ENCODE measurements at regions of chr5 and their contacts with region 1.

Region 1: DNA sequence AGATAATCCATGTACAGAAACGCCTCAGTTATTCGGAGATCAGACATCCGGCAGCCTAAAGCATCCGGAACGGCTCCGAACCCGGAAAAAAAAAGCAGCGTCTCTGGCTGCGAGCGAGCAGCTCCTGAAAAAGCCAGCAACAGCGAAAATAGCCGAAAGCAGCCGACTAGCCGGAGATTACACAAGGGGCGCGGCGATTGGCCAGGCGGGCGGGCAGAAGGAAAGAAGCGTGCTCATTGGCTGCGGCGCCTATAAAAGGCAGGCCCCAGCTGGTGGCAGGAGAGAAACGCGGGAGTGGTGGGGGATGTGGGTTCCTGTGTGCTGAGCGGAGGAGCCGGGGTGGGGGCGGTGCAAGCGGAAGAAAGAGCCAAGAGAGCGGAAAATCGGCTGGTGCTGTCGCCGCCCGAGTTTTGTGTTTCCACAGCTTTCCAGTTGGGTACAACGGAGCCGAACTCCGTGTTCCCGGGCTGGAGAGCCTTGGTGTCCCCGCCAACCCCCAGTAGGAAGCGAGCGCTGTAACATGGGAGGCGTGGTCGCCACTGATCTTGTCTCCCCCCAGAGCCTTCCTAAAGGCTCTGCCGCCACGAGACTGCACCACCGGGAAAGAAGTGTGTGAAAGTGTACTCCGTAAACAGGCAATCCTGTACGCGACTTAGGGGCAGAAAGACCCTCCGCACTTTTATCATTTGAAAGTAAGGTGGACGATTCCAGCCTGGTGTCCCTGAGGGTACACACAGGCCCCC is at the start of gene ARL15:
- DNase-seq: peak; percentile 98
- H3K4me3 Mint-ChIP-seq: peak within 1 kb of the TSS; percentile 86
- H3K27ac Mint-ChIP-seq: peak within 1 kb of the TSS; percentile 89
- H3K4me1 Mint-ChIP-seq: peaks cover 25% of the 10 kb centered on the region
- H3K27me3 Mint-ChIP-seq: peaks cover 3% of the 10 kb centered on the region
- total RNA-seq, gene ARL15: 4.5 to 5.5 TPM

Region 2: DNA sequence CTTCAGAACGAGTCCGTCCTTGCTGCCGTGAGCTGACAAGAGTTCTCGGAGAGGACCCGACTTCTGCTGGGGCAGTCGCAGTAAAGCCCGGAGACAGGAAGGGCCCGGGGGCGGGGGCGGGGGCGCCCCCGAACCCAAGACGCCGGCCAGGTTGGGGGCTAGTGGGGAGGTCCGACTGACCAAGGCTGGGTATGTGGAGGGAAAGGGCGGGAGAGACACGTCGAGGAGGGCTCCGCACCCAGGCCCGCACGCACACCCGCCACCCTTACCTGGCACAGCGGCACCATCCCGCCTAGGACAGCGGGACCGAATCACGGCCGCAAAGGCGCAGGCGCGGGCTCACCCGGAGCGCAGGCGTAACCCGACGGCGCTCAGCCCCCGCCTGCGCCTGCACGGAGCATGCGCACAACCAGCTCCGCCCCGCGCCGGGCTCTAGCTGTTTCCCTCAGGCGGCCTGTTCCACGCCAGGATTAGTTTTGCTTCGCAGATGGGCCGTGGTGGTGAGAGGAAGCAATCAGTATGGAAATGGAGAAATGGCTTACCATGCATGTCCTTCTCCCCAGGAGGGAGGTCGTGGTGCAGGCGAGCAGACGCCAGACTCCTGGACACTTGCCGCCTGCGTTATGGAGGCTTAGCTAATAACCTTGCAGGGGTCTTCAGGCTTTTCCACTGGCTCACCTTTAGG is 1201.0 kb before region 1 on chr5 and contains the start of gene MOCS2:
- CTCF ChIA-PET with region 1: no interaction called
- POLR2A ChIA-PET with region 1: no interaction called
- intact Hi-C with region 1: loop called (anchors 10 kb)
- DNase-seq: peak; percentile 93
- H3K4me3 Mint-ChIP-seq: peak within 1 kb of the TSS; percentile 94
- H3K27ac Mint-ChIP-seq: peak within 1 kb of the TSS; percentile 78
- H3K4me1 Mint-ChIP-seq: peaks cover 42% of the 10 kb centered on the region
- H3K27me3 Mint-ChIP-seq: no peaks in the 10 kb centered on the region
- total RNA-seq, gene MOCS2: 20.7 to 21.6 TPM

Region 3: GRCh38 chr5:53560506-53561191 is 750.0 kb before region 1 on chr5 and contains the start of gene NDUFS4:
- CTCF ChIA-PET with region 1: no interaction called
- POLR2A ChIA-PET with region 1: no interaction called
- intact Hi-C with region 1: loop called (anchors 5 kb)
- DNase-seq: peak; percentile 89
- H3K4me3 Mint-ChIP-seq: peak within 1 kb of the TSS; percentile 99
- H3K27ac Mint-ChIP-seq: peak within 1 kb of the TSS; percentile 90
- H3K4me1 Mint-ChIP-seq: peaks cover 29% of the 10 kb centered on the region
- H3K27me3 Mint-ChIP-seq: peaks cover 15% of the 10 kb centered on the region
- total RNA-seq, gene NDUFS4: 68.5 to 70.5 TPM

Region 4: DNA sequence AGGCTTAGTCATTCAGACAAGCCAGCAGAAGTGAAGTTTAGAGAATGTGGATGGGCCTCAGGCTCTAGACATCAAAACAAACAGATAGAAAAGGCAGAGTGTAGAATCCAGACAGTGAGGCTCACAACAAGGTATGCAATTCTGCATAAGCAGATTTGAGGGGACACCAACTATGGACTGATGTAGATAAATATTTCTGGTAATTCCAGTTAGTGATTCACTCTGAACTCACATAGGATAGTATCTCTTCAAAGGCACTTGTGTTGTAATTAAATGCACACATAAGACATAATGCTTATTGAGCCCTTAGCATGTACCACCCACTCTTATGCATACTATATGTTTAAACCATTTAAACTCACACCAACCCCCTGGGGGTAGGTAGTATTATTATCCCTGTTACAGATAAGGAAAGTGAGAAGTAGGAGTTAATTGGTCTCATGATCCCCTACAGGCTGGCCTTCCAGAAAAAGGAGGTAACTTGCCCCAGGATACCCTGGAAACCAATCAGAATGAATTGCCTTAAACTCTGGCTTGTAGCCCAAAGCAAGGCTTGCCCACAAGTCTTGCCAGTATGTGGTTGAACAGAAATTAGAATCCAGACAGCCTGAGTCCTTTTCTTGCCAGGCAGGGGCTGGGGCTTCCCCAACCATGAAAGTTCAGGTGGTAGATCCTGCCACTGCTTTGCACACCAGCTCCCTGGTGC is 105.4 kb after region 1 on chr5:
- CTCF ChIA-PET with region 1: interaction called, 7 read pairs
- POLR2A ChIA-PET with region 1: no interaction called
- intact Hi-C with region 1: loop called (anchors 1 kb)
- DNase-seq: no peak
- H3K4me3 Mint-ChIP-seq: no peak overlapping the region
- H3K27ac Mint-ChIP-seq: no peak overlapping the region
- H3K4me1 Mint-ChIP-seq: no peaks in the 10 kb centered on the region
- H3K27me3 Mint-ChIP-seq: peaks cover 4% of the 10 kb centered on the region